ENCODE measurements at regions of chr17 and their contacts with region 1.

Region 1: DNA sequence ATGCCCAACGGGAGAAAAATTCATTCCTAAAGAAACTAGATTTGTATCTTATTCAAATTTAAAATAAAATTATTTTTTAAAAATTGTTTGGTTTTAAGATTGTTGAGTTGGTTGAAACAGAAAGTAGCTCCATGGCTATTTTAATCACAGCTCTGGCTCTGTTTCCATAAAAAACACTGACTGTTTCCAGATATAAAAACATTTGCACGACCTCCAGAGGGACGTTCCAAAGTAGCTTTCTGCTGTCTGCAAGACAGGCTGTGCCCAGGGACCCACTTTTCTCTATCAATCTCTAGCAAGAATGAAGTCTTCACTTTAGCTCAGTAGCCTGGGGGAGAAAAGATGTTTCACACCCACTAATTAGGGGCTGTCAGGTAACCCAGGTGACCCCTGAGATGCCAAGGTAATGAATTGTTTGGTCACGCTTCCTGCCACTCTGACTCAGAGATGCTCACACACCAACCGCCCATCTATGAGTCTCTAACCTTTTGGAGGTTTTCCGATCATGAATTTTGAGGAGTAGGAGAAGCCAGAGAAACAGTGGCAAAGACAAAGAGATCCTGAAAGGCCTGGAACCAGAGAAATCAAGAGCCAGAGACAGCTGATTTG is 220.1 kb upstream of the SOX9 start:
- DNase-seq: no peak
- H3K4me3 ChIP-seq: no peak overlapping the region
- H3K27ac ChIP-seq: no peak overlapping the region
- H3K4me1 ChIP-seq: no peaks in the 10 kb centered on the region
- H3K27me3 ChIP-seq: no peaks in the 10 kb centered on the region
- CTCF ChIP-seq: no peak
- POLR2A ChIP-seq: no peak

Region 2: GRCh38 chr17:72244494-72244893 is 343.8 kb after region 1 on chr17:
- intact Hi-C with region 1: loop called (anchors 10 kb)
- DNase-seq: no peak
- H3K4me3 ChIP-seq: no peak overlapping the region
- H3K27ac ChIP-seq: no peak overlapping the region
- H3K4me1 ChIP-seq: no peaks in the 10 kb centered on the region
- H3K27me3 ChIP-seq: no peaks in the 10 kb centered on the region
- CTCF ChIP-seq: no peak
- POLR2A ChIP-seq: no peak